ENCODE measurements at regions of chr7 and their contacts with region 1.

Region 1: GRCh38 chr7:152675759-152676636 is at the start of gene XRCC2:
- DNase-seq: peak; percentile 97
- ATAC-seq: peak; percentile 96
- H3K4me3 Mint-ChIP-seq: peak within 1 kb of the TSS; percentile 83
- H3K27ac Mint-ChIP-seq: peak within 1 kb of the TSS; percentile 98
- H3K4me1 Mint-ChIP-seq: peaks cover 8% of the 10 kb centered on the region
- H3K27me3 Mint-ChIP-seq: no peaks in the 10 kb centered on the region
- total RNA-seq, gene XRCC2: 19.3 to 23.6 TPM

Region 2: DNA sequence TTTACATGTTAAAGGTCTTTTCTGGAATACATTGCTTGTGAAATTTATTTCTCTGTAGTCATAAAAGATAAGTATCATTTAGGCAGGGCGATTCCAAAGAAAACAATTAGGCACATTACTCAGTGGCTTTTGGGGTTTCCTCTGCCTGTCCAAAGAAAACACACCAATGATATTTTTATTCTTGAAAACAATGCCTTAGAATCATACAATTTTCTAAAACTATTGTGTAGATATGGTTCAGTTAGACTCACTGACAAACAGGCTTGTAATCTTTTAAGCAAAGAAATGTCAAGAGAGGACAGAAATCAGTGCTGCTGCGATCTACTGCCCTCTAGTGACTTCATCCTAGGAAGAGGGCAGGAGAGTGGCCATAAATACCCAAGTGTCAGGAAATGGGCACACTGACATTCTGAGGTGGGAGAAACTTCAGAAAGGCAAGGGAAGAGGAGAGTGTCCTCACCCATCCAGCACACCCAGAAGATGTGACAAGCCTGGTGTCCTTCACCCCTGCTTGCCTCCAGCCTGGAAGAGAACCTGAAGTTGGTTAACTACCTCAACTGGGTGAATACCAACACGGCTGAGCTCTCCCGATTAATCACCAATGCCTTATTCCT is 530.0 kb before region 1 on chr7:
- CTCF ChIA-PET with region 1: no interaction called
- POLR2A ChIA-PET with region 1: no interaction called
- intact Hi-C with region 1: loop called in 1 of 2 experiments (anchors 10 kb)
- DNase-seq: peak; percentile 52
- ATAC-seq: peak; percentile 43
- H3K4me3 Mint-ChIP-seq: no peak overlapping the region
- H3K27ac Mint-ChIP-seq: peak overlapping the region; percentile 93
- H3K4me1 Mint-ChIP-seq: peaks cover 48% of the 10 kb centered on the region
- H3K27me3 Mint-ChIP-seq: no peaks in the 10 kb centered on the region

Region 3: DNA sequence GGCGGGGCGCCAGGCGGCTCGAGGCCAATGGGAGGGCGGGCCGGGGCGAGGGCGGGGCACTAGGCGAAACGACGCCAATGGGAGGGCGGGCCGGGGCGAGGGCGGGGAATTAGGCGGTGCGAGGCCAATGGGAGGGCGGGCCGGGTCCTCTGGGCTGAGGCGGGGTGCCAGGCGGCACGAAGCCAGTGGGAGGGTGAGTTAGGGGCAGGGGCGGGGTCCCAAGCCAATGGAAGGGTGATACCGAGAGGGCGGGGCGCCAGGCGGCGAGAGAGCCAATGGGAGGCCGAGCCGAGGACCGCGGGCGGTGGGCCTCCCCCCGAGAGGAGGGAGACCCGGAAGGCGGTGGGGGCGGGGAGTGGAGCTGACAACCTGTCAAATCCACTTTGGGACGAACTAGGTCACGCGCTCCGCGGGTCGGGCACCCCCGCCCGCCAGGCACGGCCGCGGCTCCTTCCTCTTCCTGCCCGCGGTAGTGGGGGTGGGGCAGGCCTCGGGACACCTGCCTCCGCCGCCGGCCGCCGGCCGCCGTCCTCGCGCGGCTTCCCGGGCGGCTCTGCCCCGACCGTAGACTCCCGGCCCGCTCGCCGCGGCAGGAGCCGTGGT is 212.2 kb before region 1 on chr7:
- CTCF ChIA-PET with region 1: no interaction called
- POLR2A ChIA-PET with region 1: no interaction called
- intact Hi-C with region 1: loop called (anchors 1 to 5 kb)
- DNase-seq: peak; percentile 100
- ATAC-seq: peak; percentile 95
- H3K4me3 Mint-ChIP-seq: peak overlapping the region; percentile 88
- H3K27ac Mint-ChIP-seq: no peak overlapping the region
- H3K4me1 Mint-ChIP-seq: peaks cover 5% of the 10 kb centered on the region
- H3K27me3 Mint-ChIP-seq: no peaks in the 10 kb centered on the region

Region 4: GRCh38 chr7:152485814-152486213 is 190.2 kb before region 1 on chr7:
- CTCF ChIA-PET with region 1: no interaction called
- POLR2A ChIA-PET with region 1: no interaction called
- intact Hi-C with region 1: no loop called
- DNase-seq: no peak
- ATAC-seq: no peak
- H3K4me3 Mint-ChIP-seq: no peak overlapping the region
- H3K27ac Mint-ChIP-seq: no peak overlapping the region
- H3K4me1 Mint-ChIP-seq: no peaks in the 10 kb centered on the region
- H3K27me3 Mint-ChIP-seq: no peaks in the 10 kb centered on the region

Region 5: GRCh38 chr7:152759949-152760853 is 84.2 kb after region 1 on chr7:
- CTCF ChIA-PET with region 1: no interaction called
- POLR2A ChIA-PET with region 1: no interaction called
- intact Hi-C with region 1: loop called (anchors 1 kb)
- DNase-seq: peak; percentile 42
- ATAC-seq: peak; percentile 21
- H3K4me3 Mint-ChIP-seq: peak overlapping the region; percentile 91
- H3K27ac Mint-ChIP-seq: peak overlapping the region; percentile 91
- H3K4me1 Mint-ChIP-seq: peaks cover 20% of the 10 kb centered on the region
- H3K27me3 Mint-ChIP-seq: no peaks in the 10 kb centered on the region